Esophagus muscularis mucosa (tissue), 4 donors: ENCODE measurements at regions of chr12 and their contacts with region 1.

Region 1: GRCh38 chr12:123905319-123905925 is 67.2 kb downstream of the CCDC92 start:
- DNase-seq: no peak
- H3K4me3 ChIP-seq: no peak overlapping the region
- H3K27ac ChIP-seq: no peak overlapping the region
- H3K4me1 ChIP-seq: no peaks in the 10 kb centered on the region
- H3K27me3 ChIP-seq: peaks cover 0 to 38% (median 0%) of the 10 kb centered on the region in 4 donors
- CTCF ChIP-seq: peak; percentile 70 to 75 (median 72)
- EP300 ChIP-seq: no peak
- POLR2A ChIP-seq: no peak

Region 2: DNA sequence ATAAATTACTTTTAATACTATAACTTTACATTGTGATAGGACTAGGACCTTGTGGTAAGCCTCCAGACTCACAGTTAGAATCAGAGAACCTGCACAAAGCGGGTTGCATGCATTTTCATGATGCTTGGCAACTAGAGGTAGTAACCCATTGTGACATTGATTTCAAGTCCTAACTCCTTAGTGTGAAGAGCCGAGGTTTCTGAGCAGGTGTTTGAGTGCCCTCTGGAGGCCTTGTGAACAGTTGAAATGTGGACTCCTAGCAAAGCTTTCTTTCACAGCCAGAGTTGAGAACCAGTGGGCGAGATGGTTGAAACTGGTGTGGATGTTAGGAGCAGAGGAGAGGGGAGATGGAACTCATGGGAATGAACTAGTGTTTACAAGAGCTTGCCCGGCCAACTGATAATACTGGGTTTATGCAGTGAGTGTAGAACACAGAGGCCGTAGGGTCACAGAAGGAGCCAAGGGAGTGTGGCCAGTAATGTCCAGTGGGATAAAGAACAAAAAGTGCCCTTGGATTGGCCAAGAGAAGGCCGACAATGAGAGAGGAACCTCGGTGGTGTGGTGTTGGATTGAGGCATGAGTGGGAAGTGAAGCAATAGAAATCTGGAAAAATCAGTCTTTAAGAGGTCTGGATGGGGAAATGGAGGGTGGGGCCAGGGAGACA is 78.5 kb after region 1 on chr12:
- intact Hi-C with region 1: loop called (anchors 5 kb)
- DNase-seq: no peak
- H3K4me3 ChIP-seq: no peak overlapping the region
- H3K27ac ChIP-seq: peak overlapping the region in 1 of 4 donors; percentile 6
- H3K4me1 ChIP-seq: peaks cover 11 to 15% (median 13%) of the 10 kb centered on the region in 4 donors
- H3K27me3 ChIP-seq: no peaks in the 10 kb centered on the region
- CTCF ChIP-seq: peak; percentile 37 to 67 (median 59)
- EP300 ChIP-seq: no peak
- POLR2A ChIP-seq: no peak